Cardiac septum (tissue), 1 donor: ENCODE measurements at regions of chr6 and their contacts with region 1.

Region 1: GRCh38 chr6:139375232-139376016 is 976 bp upstream of the CITED2 start:
- DNase-seq: peak; percentile 94

Region 2: DNA sequence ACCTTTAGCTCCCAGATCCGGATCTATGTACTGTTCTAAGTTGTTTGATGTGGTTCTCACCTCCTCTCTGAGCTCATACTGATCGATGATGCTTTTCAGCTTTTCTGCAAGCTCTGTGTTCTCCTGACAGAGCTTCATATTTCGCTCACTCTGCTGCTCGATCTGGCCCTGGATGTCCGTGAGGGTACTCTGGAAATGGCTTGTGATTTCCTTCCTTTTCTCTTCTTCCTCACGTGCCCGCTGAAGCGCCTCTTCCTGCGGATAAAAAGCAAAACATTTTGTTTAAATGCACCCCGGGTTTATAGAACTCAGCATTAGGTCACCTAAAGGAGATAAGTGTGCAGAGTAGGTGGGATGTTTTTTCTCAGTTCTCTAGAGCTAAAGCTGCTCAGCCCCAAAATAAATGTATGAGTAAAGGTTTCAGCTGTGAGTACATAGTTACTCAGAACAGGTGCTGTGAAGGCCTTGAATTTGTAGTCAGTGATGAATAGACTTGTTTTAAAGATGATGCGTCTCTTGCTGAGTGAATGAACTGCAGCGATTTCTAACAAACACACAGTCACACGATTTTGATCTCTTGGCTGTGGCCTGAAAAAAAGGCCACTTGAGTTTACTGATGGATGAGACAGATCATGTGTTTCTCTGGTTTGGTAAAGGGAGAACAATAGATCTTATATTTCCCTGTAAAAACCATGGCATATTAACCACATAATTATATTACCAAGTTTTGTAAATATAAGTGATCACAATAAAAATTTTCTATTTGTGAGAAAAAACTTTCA is 112.7 kb before region 1 on chr6:
- intact Hi-C with region 1: no loop called
- DNase-seq: no peak

Region 3: GRCh38 chr6:139508023-139508422 is 132.6 kb after region 1 on chr6:
- intact Hi-C with region 1: loop called (anchors 5 kb)
- DNase-seq: no peak

Region 4: GRCh38 chr6:139605350-139605749 is 229.9 kb after region 1 on chr6:
- intact Hi-C with region 1: no loop called
- DNase-seq: no peak

Region 5: GRCh38 chr6:139764498-139764986 is 389.1 kb after region 1 on chr6:
- intact Hi-C with region 1: loop called (anchors 2 kb)
- DNase-seq: no peak

Region 6: GRCh38 chr6:139881728-139882211 is 506.3 kb after region 1 on chr6:
- intact Hi-C with region 1: loop called (anchors 2 kb)
- DNase-seq: no peak

Region 7: DNA sequence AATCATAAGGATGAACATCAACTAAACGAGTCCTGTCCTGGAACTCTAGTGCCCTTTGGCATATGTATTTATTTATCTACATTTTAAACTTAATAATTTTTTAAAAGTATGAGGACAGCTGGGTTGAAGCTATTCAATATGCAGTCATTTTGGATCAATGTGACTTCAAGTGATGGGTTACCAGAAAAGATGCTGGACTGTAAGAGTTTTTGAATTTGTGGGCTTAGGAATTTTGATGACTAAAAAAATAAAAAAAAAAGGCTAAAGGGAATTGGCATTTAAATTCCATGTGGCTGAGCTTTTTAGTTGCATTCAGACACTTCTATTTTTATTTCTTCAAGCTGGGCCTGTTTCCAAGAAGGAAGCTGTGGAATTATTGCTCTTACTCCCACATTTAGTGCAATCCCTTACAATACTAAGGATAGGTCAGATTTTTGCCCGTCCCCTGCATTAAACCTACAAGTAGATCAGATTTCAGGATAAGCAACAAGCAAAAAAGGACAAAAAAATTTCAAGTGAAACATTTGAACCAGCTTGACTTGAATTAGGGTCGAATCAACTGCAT is 703.2 kb after region 1 on chr6:
- intact Hi-C with region 1: loop called (anchors 5 kb)
- DNase-seq: no peak

Region 8: DNA sequence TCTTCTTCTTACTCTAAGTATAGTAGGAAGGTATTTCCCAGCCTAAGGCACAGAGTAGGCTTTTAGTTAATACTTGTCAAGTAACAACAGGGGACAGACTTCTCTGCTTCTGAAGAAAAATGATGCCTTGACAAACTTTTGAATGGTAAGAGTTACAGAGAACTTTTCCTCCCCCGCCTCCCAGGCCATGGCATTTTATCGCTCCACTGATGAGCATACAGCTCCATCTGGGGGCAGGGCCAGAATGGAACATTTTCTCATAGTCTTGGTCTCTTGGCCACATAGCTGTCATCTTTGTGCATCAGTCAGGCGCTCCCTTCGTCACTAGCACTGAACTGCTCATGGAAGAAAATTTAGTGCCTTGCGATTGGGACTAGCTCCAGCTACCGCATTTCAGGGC is 1065.8 kb after region 1 on chr6:
- intact Hi-C with region 1: loop called (anchors 2 kb)
- DNase-seq: peak; percentile 81

Region 9: GRCh38 chr6:140774080-140774505 is 1398.7 kb after region 1 on chr6:
- intact Hi-C with region 1: loop called (anchors 5 kb)
- DNase-seq: no peak